Activated CD8-positive, alpha-beta memory T cell treated with anti-CD3 and anti-CD28 coated beads, Interleukin-2, amount 10 ng/mL, durations not matched to agents 7 days and 5 days (primary cell): ENCODE measurements at regions of chr2 and their contacts with region 1.

Region 1: GRCh38 chr2:207746131-207746530 is 23.6 kb downstream of the FZD5 start:
- DNase-seq: peak; percentile 64
- ATAC-seq: peak; percentile 75
- H3K4me3 Mint-ChIP-seq: no peak overlapping the region
- H3K27ac Mint-ChIP-seq: no peak overlapping the region
- H3K4me1 Mint-ChIP-seq: peaks cover 2% of the 10 kb centered on the region
- H3K27me3 Mint-ChIP-seq: no peaks in the 10 kb centered on the region

Region 2: DNA sequence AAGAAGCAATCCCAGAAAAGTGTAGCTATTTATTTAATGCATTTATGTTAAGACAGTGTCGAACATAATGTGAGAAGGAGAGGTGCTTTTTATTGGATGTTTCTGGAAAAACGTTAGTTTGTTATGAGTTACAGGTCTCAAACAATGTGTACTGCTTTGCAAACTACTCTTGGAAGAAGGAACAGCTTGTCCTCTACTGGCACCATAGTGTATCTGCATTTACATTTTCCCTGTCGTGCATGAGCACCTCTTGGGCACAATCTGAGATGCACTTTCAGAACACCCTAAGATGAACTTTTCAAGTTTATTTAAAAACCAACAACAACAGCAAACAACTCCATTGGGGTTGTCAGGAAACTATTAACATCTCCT is 11.9 kb before region 1 on chr2:
- CTCF ChIA-PET with region 1: interaction called, 20 read pairs
- DNase-seq: no peak
- ATAC-seq: no peak
- H3K4me3 Mint-ChIP-seq: no peak overlapping the region
- H3K27ac Mint-ChIP-seq: no peak overlapping the region
- H3K4me1 Mint-ChIP-seq: peaks cover 5% of the 10 kb centered on the region
- H3K27me3 Mint-ChIP-seq: no peaks in the 10 kb centered on the region

Region 3: DNA sequence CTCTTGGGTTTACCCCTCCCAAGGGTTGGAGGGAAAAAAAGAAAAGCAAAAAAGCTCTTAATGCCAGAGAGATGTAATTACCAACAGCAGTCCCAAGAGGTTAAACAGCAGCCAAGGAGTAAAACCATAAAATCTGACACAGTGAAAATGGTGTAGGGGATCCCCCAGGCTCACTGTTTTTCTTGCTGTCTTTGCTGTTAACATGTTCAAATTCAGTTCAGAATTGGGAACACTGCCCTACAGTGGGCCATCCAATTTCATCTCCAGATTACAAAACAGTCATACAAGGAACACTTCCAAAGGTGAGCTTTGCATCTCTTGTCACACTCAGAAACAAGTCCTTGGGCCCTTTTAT is 224.7 kb after region 1 on chr2:
- CTCF ChIA-PET with region 1: interaction called, 14 read pairs
- DNase-seq: no peak
- ATAC-seq: no peak
- H3K4me3 Mint-ChIP-seq: no peak overlapping the region
- H3K27ac Mint-ChIP-seq: no peak overlapping the region
- H3K4me1 Mint-ChIP-seq: no peaks in the 10 kb centered on the region
- H3K27me3 Mint-ChIP-seq: no peaks in the 10 kb centered on the region

Region 4: GRCh38 chr2:207975921-207976320 is 229.8 kb after region 1 on chr2:
- CTCF ChIA-PET with region 1: interaction called, 14 read pairs
- DNase-seq: no peak
- ATAC-seq: no peak
- H3K4me3 Mint-ChIP-seq: no peak overlapping the region
- H3K27ac Mint-ChIP-seq: no peak overlapping the region
- H3K4me1 Mint-ChIP-seq: no peaks in the 10 kb centered on the region
- H3K27me3 Mint-ChIP-seq: no peaks in the 10 kb centered on the region

Region 5: GRCh38 chr2:208033758-208034502 is 287.8 kb after region 1 on chr2:
- CTCF ChIA-PET with region 1: interaction called, 80 read pairs
- DNase-seq: peak; percentile 61
- ATAC-seq: peak; percentile 82
- H3K4me3 Mint-ChIP-seq: no peak overlapping the region
- H3K27ac Mint-ChIP-seq: no peak overlapping the region
- H3K4me1 Mint-ChIP-seq: peaks cover 7% of the 10 kb centered on the region
- H3K27me3 Mint-ChIP-seq: peaks cover 5% of the 10 kb centered on the region

Region 6: DNA sequence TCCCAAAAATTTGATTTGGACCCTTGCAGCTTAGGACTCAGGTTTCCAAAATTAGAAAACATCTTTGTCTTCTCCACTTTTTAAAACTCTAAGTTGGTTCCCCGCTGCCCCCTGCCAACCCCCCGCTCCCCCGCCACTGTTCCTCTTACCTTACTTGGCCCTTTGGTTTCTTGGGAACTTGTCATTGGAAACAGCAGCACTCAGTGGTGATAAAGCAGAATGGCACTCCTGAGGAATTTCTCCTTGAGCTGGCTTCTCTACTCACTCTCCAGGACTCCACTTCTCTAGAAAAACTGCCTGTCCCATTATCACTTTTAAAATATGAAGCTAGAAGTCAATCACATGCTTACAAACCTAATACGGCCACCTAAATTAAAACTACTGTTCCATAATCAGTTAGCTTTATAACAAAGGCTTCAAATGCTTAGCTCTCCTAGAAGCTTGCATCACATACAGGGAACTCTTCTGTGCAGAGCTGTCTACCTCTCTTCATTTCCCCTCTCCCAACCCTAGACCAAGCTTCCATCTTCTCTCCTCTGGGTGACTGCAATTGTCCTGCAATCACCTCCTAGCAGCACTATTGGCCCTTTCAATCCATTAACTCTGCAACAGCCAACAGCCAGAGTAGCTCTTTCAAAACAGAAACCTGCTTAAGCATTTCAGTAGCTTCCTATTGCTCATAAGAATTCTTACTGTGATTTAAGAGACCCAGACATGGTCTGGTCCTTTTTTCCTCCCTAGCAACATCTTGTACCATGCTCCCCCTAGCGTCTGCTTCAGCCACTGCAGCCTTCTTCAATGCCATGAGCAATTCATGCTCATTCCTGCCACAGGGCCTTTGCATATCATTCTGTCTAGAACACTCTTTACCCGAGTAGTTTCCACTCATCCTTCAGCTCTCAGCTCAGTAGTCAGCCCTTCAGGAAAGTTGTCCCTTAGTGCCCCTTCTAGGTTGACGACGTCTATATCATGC is 294.4 kb after region 1 on chr2:
- CTCF ChIA-PET with region 1: interaction called, 80 read pairs
- DNase-seq: peak; percentile 83
- ATAC-seq: peak; percentile 85
- H3K4me3 Mint-ChIP-seq: no peak overlapping the region
- H3K27ac Mint-ChIP-seq: no peak overlapping the region
- H3K4me1 Mint-ChIP-seq: peaks cover 2% of the 10 kb centered on the region
- H3K27me3 Mint-ChIP-seq: peaks cover 11% of the 10 kb centered on the region

Region 7: DNA sequence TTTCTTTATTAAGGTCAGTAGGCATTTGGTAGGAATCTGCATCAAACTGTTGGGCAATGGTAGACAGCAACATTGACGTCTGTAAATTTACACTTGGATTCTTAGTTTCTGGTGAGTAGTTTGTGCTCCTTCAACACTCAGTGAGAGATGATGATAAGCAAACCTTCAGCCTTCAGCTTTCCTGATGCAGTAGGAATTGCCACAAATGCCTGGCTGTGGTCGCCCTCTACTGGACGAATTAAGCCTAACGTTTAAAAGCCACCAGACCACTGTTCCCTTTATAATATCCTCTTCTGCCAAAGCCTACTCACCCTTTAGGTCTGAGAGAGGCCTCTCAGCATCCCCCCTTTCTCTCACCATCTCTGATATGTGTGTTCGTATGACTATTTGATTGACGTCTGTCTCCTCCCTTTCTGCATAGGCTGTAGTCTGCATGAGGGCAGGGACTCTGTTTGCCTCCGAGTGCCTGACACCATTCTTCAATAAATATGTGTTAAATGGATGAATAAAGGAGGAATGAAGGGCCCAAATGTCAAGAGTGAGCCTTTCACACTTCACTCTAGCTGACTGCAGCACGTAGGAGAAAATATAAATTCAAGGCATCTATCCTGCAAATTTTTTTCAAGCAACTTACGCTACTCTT is 326.2 kb after region 1 on chr2:
- CTCF ChIA-PET with region 1: interaction called, 12 read pairs
- DNase-seq: peak; percentile 61
- ATAC-seq: peak; percentile 65
- H3K4me3 Mint-ChIP-seq: no peak overlapping the region
- H3K27ac Mint-ChIP-seq: no peak overlapping the region
- H3K4me1 Mint-ChIP-seq: no peaks in the 10 kb centered on the region
- H3K27me3 Mint-ChIP-seq: peaks cover 12% of the 10 kb centered on the region